Activated naive CD4-positive, alpha-beta T cell treated with anti-CD3 and anti-CD28 coated beads for 36 hours (primary cell): ENCODE measurements at regions of chr7 and their contacts with region 1.

Region 1: DNA sequence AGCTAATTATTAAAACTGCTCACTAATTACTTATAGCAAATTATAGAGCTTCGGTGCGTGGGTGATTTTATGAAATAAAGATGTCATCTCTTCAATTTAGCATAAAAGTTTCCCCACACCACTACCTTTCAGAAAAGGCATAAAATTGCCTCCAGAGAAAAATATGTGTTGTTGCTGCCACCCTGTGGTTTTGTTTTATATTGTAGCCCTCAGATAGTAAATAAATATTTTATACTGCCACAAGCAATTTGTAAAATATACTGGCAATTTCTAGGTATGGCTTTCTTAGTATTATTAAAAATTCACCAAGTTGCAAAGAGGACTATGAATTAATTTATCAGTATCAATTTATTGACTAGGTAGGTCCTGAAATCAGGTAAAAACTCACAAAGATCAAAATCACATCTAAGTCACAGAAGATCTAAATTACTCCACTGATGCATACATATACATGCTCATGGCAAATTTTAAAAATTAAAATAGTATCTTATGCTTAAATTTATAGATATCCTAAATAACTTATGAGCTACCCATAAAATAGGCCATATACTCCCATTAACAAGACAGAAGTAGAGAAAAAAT is 26.5 kb downstream of the ASNS start:
- DNase-seq: peak; percentile 39
- H3K4me3 Mint-ChIP-seq: no peak overlapping the region
- H3K27ac Mint-ChIP-seq: no peak overlapping the region
- H3K4me1 Mint-ChIP-seq: no peaks in the 10 kb centered on the region
- H3K27me3 Mint-ChIP-seq: no peaks in the 10 kb centered on the region

Region 2: DNA sequence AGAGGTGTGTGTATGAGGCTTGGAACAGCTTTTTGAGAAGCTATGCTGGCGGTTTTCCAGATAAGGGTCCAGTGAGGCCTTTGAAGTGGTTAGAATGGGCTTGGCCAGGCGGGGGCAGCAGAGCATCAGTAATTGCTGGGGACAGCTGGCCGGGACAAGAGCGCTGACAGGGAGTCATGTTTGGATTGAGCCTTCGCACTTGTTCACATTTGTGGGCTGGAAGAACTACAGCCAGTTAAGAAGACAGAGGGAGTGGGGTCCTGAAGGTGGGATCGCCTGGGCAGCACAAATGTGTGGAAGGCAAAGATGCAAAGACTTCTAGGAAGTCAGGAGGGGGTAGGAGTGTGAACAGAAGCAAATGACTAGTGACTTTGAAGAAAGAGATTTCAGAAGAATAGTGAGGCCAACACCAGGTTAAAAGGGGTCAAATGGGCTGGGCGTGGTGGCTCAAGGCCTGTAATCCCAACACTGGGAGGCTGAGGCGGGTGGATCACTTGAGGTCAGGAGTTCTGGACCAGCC is 740.9 kb before region 1 on chr7:
- CTCF ChIA-PET with region 1: interaction called, 4 read pairs
- intact Hi-C with region 1: loop called (anchors 1 kb)
- DNase-seq: peak; percentile 81
- H3K4me3 Mint-ChIP-seq: no peak overlapping the region
- H3K27ac Mint-ChIP-seq: no peak overlapping the region
- H3K4me1 Mint-ChIP-seq: no peaks in the 10 kb centered on the region
- H3K27me3 Mint-ChIP-seq: peaks cover 34% of the 10 kb centered on the region